Activated CD4-positive, alpha-beta T cell treated with anti-CD3 and anti-CD28 coated beads for 36 hours (primary cell): ENCODE measurements at regions of chr16 and their contacts with region 1.

Region 1: GRCh38 chr16:80526425-80527061 is 14.2 kb upstream of the DYNLRB2 start:
- DNase-seq: peak; percentile 71
- ATAC-seq: peak; percentile 66
- H3K4me3 Mint-ChIP-seq: no peak overlapping the region
- H3K27ac Mint-ChIP-seq: no peak overlapping the region
- H3K4me1 Mint-ChIP-seq: no peaks in the 10 kb centered on the region
- H3K27me3 Mint-ChIP-seq: no peaks in the 10 kb centered on the region

Region 2: DNA sequence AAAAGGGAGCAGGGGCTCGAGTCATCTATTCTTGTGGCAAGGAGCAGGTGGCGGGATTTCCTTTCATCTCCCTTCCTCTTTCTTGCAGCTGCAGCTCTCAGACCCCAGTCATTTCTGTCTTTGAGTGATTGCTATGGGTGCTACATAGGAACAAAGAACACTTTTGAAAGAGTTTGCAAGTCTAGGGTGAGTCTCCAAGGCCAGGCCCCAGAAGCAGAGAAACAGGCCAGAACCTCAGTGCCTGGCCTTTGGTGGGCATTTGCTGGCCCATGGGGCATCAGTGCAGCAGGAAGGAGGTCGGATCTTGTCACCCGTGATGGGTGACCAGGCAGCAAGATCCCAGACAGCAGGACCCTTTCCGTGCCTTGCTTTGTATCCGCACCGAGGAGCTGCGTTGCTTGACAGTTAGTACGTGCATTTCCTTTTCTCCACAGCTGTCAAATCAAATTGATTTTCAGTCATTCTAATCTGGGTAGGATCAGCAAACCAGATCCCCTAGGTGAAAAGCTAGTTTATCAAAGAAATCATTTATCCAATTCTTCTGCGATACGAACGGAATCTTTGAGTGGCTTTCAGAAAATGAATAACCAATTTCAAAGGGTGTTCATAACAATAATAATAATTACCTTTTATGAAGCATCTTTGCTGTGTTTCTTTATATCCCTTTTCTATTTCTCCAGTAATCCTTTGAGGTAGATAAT is 681.4 kb before region 1 on chr16:
- CTCF ChIA-PET with region 1: no interaction called
- POLR2A ChIA-PET with region 1: no interaction called
- intact Hi-C with region 1: no loop called
- DNase-seq: peak; percentile 47
- ATAC-seq: peak; percentile 45
- H3K4me3 Mint-ChIP-seq: no peak overlapping the region
- H3K27ac Mint-ChIP-seq: peak overlapping the region; percentile 74
- H3K4me1 Mint-ChIP-seq: peaks cover 32% of the 10 kb centered on the region
- H3K27me3 Mint-ChIP-seq: peaks cover 10% of the 10 kb centered on the region

Region 3: GRCh38 chr16:80466024-80466987 is 60.2 kb before region 1 on chr16:
- CTCF ChIA-PET with region 1: interaction called, 15 read pairs
- POLR2A ChIA-PET with region 1: no interaction called
- intact Hi-C with region 1: loop called (anchors 1 to 5 kb)
- DNase-seq: peak; percentile 82
- ATAC-seq: peak; percentile 78
- H3K4me3 Mint-ChIP-seq: no peak overlapping the region
- H3K27ac Mint-ChIP-seq: no peak overlapping the region
- H3K4me1 Mint-ChIP-seq: no peaks in the 10 kb centered on the region
- H3K27me3 Mint-ChIP-seq: peaks cover 9% of the 10 kb centered on the region

Region 4: DNA sequence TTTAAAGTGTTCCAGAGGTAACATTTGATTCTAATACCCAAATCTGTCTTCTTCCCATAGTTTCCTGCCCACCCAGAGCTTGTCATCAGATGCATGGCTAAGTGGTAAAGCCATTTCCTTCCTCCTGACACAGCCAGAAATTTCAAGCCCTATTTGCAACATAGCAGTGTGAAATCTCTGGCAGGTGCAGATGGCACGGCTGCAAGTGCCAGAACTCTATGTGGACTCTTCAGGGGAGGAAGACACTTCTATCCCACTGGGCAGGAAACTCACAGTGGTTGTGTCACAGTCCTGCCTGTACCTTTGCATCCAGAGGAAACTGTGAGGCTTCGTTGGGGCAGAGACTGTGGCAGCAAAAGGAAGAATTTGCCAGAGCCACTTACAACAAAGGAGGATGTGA is 27.5 kb after region 1 on chr16:
- CTCF ChIA-PET with region 1: interaction called, 11 read pairs
- POLR2A ChIA-PET with region 1: no interaction called
- intact Hi-C with region 1: no loop called
- DNase-seq: no peak
- ATAC-seq: no peak
- H3K4me3 Mint-ChIP-seq: no peak overlapping the region
- H3K27ac Mint-ChIP-seq: no peak overlapping the region
- H3K4me1 Mint-ChIP-seq: peaks cover 9% of the 10 kb centered on the region
- H3K27me3 Mint-ChIP-seq: no peaks in the 10 kb centered on the region

Region 5: DNA sequence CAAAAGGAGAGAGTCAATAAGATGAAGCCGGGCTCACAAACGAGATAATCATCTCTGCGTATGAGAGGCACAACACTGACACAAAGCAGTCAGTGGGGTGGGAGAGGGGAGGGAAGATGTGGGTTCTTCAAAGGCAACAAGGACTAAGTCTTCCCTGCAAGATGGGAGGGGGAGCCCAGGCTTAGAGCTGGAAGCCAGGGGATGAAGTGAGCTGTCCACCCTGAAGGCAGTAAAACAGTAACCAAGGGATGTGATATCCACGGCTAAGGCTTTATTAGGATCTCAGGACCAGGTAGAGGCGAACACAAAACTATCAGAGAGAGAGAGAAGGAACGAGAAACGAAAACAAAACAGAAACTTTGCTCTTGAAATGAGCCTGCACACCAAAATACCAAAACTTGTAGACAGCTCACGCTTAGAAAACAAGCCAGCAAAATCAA is 130.2 kb after region 1 on chr16:
- CTCF ChIA-PET with region 1: interaction called, 3 read pairs
- POLR2A ChIA-PET with region 1: no interaction called
- intact Hi-C with region 1: loop called in 1 of 2 experiments (anchors 5 kb)
- DNase-seq: peak; percentile 57
- ATAC-seq: peak; percentile 92
- H3K4me3 Mint-ChIP-seq: peak overlapping the region; percentile 77
- H3K27ac Mint-ChIP-seq: peak overlapping the region; percentile 87
- H3K4me1 Mint-ChIP-seq: peaks cover 27% of the 10 kb centered on the region
- H3K27me3 Mint-ChIP-seq: no peaks in the 10 kb centered on the region

Region 6: GRCh38 chr16:80816365-80816764 is 289.8 kb after region 1 on chr16:
- CTCF ChIA-PET with region 1: interaction called, 30 read pairs
- POLR2A ChIA-PET with region 1: no interaction called
- intact Hi-C with region 1: no loop called
- DNase-seq: no peak
- ATAC-seq: no peak
- H3K4me3 Mint-ChIP-seq: no peak overlapping the region
- H3K27ac Mint-ChIP-seq: no peak overlapping the region
- H3K4me1 Mint-ChIP-seq: no peaks in the 10 kb centered on the region
- H3K27me3 Mint-ChIP-seq: peaks cover 13% of the 10 kb centered on the region

Region 7: GRCh38 chr16:80852261-80852872 is 325.8 kb after region 1 on chr16:
- CTCF ChIA-PET with region 1: interaction called, 8 read pairs
- POLR2A ChIA-PET with region 1: no interaction called
- intact Hi-C with region 1: loop called (anchors 1 kb)
- DNase-seq: peak; percentile 59
- ATAC-seq: no peak
- H3K4me3 Mint-ChIP-seq: no peak overlapping the region
- H3K27ac Mint-ChIP-seq: no peak overlapping the region
- H3K4me1 Mint-ChIP-seq: no peaks in the 10 kb centered on the region
- H3K27me3 Mint-ChIP-seq: peaks cover 10% of the 10 kb centered on the region